Activated CD4-positive, alpha-beta T cell treated with anti-CD3 and anti-CD28 coated beads for 36 hours (primary cell): ENCODE measurements at regions of chr5 and their contacts with region 1.

Region 1: GRCh38 chr5:147558826-147559225 is 49.0 kb upstream of the DPYSL3 start:
- DNase-seq: peak; percentile 18
- ATAC-seq: no peak
- H3K4me3 Mint-ChIP-seq: no peak overlapping the region
- H3K27ac Mint-ChIP-seq: no peak overlapping the region
- H3K4me1 Mint-ChIP-seq: no peaks in the 10 kb centered on the region
- H3K27me3 Mint-ChIP-seq: peaks cover 3% of the 10 kb centered on the region

Region 2: GRCh38 chr5:147453875-147454814 is 104.7 kb before region 1 on chr5:
- CTCF ChIA-PET with region 1: interaction called, 3 read pairs
- POLR2A ChIA-PET with region 1: no interaction called
- intact Hi-C with region 1: loop called in 1 of 2 experiments (anchors 2 kb)
- DNase-seq: peak; percentile 85
- ATAC-seq: peak; percentile 82
- H3K4me3 Mint-ChIP-seq: peak overlapping the region; percentile 69
- H3K27ac Mint-ChIP-seq: no peak overlapping the region
- H3K4me1 Mint-ChIP-seq: peaks cover 9% of the 10 kb centered on the region
- H3K27me3 Mint-ChIP-seq: peaks cover 72% of the 10 kb centered on the region

Region 3: GRCh38 chr5:147464211-147464610 is 94.6 kb before region 1 on chr5:
- CTCF ChIA-PET with region 1: no interaction called
- POLR2A ChIA-PET with region 1: no interaction called
- intact Hi-C with region 1: loop called in 1 of 2 experiments (anchors 1 kb)
- DNase-seq: no peak
- ATAC-seq: no peak
- H3K4me3 Mint-ChIP-seq: no peak overlapping the region
- H3K27ac Mint-ChIP-seq: no peak overlapping the region
- H3K4me1 Mint-ChIP-seq: no peaks in the 10 kb centered on the region
- H3K27me3 Mint-ChIP-seq: peaks cover 5% of the 10 kb centered on the region